ENCODE measurements at regions of chr12 and their contacts with region 1.

Region 1: DNA sequence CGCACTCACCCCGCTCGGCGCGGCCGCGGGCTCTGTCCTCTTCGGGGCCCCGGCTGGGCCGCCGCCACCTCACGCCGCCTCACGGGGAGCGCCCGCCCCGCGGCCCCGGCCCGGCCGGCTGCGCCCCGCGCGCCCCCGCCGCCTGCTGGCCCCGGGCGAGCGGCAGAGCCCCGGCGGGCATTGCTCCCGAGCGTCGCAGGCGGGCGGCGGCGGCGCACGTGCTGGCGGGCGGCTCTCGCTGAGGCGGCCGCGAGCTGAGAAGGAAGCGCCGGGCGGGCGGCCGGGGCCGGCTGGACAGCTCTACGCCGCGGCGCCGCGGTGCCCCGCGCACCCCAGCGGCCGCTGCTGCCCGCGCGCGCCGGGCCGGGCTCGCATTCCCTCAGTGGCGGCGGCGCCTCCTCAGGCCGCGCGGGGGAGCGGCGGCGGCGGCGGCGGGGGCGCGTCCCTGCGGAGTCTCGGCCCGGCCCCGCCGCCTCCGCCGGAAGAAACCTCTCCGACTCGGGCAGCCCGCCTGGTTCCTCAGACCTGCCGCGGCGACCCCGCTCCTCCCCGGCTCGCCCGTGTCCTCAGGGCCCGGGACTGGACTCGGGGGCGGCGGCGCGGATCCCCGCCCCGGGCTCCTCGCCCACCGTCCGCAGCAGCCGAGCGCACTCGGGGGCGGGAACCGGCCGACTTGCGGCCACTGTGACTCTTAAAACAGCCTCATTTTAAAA is at the start of gene PITPNM2:
- DNase-seq: peak; percentile 43 to 70 (median 62)
- H3K4me3 ChIP-seq: peak within 1 kb of the TSS; percentile 22 to 84 (median 54)
- H3K27ac ChIP-seq: peak within 1 kb of the TSS; percentile 41 to 96 (median 90)
- H3K4me1 ChIP-seq: peaks cover 11 to 37% of the 10 kb centered on the region in 2 donors
- H3K27me3 ChIP-seq: no peaks in the 10 kb centered on the region
- CTCF ChIP-seq: peak in 3 of 6 experiments; percentile 18 to 70 (median 30)
- POLR2A ChIP-seq: peak; percentile 5 to 23
- total RNA-seq, gene PITPNM2: 3.7 to 57.4 (median 25.6) TPM

Region 2: DNA sequence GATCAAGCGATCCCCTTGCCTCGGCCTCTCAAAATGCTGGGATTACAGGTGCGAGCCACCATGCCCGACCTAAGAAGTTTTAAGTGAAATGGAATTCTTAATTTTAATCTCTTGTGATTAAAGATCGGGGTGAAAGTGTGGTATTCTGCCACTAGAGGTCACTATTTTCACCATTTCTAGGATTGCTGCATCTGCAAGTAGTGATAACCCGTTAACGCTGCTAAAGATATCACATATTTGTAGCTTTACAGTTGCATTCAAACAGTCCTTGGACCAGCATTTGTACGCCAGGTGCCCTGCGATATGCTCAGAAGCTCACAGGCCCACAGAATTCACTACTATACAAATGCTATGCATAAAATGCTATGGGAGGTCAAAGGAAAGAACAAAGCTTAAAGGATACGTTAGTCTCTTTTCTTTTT is 357.2 kb before region 1 on chr12:
- intact Hi-C with region 1: no loop called
- DNase-seq: peak in 1 of 7 donors; percentile 13
- H3K4me3 ChIP-seq: no peak overlapping the region
- H3K27ac ChIP-seq: no peak overlapping the region
- H3K4me1 ChIP-seq: peaks cover 0 to 3% of the 10 kb centered on the region in 2 donors
- H3K27me3 ChIP-seq: no peaks in the 10 kb centered on the region
- CTCF ChIP-seq: peak; percentile 53 to 83 (median 70)
- POLR2A ChIP-seq: no peak

Region 3: DNA sequence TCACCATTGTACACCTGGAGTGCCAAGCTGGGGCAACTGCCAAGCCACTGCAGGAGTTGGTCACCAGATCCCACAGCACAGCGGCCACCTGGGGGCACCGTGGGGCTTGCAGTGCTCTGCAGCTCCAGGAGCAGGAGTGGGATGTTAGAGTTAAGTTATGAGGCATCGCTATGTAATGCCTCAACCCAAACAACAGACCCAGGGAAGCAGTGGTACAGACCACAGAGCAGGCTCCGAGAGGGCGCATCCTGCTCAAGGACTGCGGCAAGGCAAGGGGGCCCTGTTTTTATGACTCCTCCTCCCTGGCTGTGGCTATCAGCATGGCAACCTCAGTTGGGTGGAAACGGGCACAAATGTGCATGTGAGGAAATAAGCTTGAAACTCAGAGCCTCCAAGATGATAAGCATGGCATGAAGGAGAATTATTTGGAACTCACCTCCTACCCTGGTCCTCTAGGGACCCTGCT is 107.3 kb before region 1 on chr12:
- intact Hi-C with region 1: loop called (anchors 10 kb)
- DNase-seq: peak; percentile 83 to 92 (median 86)
- H3K4me3 ChIP-seq: no peak overlapping the region
- H3K27ac ChIP-seq: peak overlapping the region in 3 of 5 donors; percentile 11 to 39 (median 23)
- H3K4me1 ChIP-seq: peaks cover 10 to 19% of the 10 kb centered on the region in 2 donors
- H3K27me3 ChIP-seq: no peaks in the 10 kb centered on the region
- CTCF ChIP-seq: peak; percentile 34 to 79 (median 68)
- POLR2A ChIP-seq: peak in 1 of 2 donors; percentile 30

Measured in adrenal gland (tissue), 19 donors.